Endothelial cell of umbilical vein (primary cell): ENCODE measurements at regions of chr2 and their contacts with region 1.

Region 1: DNA sequence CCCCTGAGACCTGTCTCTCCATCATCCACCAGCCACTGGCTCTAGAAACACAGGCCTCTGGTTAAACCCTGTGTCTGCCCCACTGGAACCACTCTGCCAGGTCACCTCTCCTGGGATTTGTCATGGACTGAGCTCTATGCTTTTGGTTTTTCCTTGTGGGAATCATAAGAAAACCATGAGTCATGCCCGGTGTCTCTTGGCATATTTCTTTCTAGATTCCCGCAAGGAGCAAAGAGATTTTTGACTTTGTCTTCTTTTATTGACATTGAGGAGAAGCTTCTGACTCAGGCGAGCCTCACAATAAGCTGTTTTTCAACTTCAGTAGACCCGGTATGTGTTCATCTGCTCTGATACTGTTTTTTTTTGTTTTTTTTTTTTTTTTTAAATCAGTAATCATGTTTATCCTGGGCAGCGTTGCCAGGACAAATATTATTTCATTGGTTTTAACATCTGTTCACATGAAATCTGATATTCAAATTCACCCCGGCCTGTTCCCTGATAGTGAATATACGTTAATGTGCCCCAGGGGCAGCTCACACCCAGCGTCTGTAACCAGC is 207.1 kb downstream of the ACKR3 start:
- DNase-seq: peak; percentile 82
- H3K4me3 ChIP-seq: no peak overlapping the region
- H3K27ac ChIP-seq: peak overlapping the region; percentile 72
- H3K4me1 ChIP-seq: peaks cover 15% of the 10 kb centered on the region
- H3K27me3 ChIP-seq: no peaks in the 10 kb centered on the region
- CTCF ChIP-seq: no peak
- POLR2A ChIP-seq: no peak

Region 2: DNA sequence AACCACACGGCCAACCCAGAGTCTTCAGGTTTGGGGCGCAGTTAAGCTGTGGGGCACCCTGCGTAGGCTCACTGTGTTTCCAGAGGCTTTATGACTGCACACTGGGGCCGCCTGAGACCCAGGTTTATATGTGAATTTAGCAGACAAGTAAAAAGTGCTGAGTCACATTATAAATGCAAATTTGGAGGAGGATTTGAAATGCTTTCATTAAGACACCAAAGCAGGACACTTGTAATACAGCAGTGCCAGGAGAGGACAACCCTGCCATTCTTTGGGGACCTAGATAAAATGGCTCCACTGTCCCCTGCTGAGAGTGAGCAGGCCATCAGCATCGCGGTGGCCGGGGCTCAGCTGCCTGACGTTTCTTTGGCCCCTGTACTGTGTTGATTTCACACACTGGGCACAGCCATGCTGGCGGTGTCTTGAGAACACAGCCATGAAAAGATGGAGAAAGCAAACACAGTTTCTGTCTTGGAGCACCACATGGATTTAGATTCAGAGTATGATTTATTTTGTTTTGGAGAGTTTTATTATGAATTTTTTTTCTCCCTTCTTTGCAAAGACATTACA is 196.9 kb before region 1 on chr2:
- CTCF ChIA-PET with region 1: no interaction called
- POLR2A ChIA-PET with region 1: no interaction called
- dilution Hi-C with region 1: no loop called
- intact Hi-C with region 1: no loop called
- DNase-seq: peak; percentile 4
- H3K4me3 ChIP-seq: no peak overlapping the region
- H3K27ac ChIP-seq: no peak overlapping the region
- H3K4me1 ChIP-seq: peaks cover 32% of the 10 kb centered on the region
- H3K27me3 ChIP-seq: no peaks in the 10 kb centered on the region
- CTCF ChIP-seq: no peak
- POLR2A ChIP-seq: no peak

Region 3: GRCh38 chr2:236824877-236825692 is 48.3 kb after region 1 on chr2:
- CTCF ChIA-PET with region 1: no interaction called
- POLR2A ChIA-PET with region 1: no interaction called
- dilution Hi-C with region 1: no loop called
- intact Hi-C with region 1: loop called (anchors 2 kb)
- DNase-seq: peak; percentile 18
- H3K4me3 ChIP-seq: no peak overlapping the region
- H3K27ac ChIP-seq: no peak overlapping the region
- H3K4me1 ChIP-seq: peaks cover 37% of the 10 kb centered on the region
- H3K27me3 ChIP-seq: no peaks in the 10 kb centered on the region
- CTCF ChIP-seq: no peak
- POLR2A ChIP-seq: no peak

Region 4: DNA sequence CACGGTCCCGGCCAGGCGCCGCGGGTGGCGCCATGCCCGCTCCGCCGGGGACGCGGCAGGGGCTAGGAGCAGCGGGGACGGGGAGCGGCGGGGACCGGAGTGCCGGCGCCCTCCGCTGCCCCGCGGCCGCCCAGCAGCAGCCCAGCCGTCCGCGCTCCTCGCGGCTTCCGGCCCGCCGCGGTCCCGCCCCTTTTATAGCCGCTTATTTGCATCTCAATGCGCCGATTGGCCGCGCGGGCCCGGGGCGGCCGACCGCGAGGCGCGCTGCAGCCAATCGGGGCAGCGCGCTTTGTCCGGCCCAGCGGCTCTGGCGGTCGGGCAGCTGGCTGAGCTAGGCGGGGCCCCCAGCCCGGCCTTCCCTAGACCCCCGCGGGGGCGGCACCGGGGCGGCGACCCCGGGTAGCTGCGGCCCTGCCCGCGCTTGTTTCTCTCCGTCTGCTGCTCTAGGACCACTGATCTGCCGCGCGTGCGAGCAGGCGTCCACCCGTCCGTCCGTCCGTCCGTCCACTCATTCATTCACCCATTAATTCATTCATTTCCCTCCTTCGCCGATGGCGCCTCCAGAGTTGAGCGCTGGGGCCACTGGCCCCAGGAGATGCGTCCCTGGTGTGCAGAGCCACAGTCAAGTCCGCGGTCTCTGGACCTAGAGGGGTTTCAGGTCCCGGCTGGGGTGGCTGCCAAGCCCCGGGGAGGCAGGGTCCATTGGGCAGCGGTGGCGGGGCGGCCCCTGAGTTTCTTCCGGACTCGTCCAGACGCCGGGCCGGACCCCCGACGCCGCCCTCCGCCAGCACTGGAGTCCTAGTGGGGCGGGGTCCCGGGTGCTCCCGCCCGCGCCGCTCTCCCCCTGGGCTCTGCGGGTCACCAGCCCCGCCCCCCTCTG is 1463.3 kb after region 1 on chr2 and contains the start of gene HES6:
- CTCF ChIA-PET with region 1: no interaction called
- POLR2A ChIA-PET with region 1: no interaction called
- dilution Hi-C with region 1: no loop called
- intact Hi-C with region 1: no loop called
- DNase-seq: peak; percentile 84
- H3K4me3 ChIP-seq: peak within 1 kb of the TSS; percentile 6 to 36 (median 7)
- H3K27ac ChIP-seq: no peak within 1 kb of the TSS
- H3K4me1 ChIP-seq: peaks cover 3% of the 10 kb centered on the region
- H3K27me3 ChIP-seq: peaks cover 9 to 12% of the 10 kb centered on the region in 2 experiments
- CTCF ChIP-seq: no peak
- POLR2A ChIP-seq: peak; percentile 57
- total RNA-seq, gene HES6: 5.1 and 5.4 TPM in 2 replicates